ENCODE measurements at regions of chr1 and their contacts with region 1.

Region 1: DNA sequence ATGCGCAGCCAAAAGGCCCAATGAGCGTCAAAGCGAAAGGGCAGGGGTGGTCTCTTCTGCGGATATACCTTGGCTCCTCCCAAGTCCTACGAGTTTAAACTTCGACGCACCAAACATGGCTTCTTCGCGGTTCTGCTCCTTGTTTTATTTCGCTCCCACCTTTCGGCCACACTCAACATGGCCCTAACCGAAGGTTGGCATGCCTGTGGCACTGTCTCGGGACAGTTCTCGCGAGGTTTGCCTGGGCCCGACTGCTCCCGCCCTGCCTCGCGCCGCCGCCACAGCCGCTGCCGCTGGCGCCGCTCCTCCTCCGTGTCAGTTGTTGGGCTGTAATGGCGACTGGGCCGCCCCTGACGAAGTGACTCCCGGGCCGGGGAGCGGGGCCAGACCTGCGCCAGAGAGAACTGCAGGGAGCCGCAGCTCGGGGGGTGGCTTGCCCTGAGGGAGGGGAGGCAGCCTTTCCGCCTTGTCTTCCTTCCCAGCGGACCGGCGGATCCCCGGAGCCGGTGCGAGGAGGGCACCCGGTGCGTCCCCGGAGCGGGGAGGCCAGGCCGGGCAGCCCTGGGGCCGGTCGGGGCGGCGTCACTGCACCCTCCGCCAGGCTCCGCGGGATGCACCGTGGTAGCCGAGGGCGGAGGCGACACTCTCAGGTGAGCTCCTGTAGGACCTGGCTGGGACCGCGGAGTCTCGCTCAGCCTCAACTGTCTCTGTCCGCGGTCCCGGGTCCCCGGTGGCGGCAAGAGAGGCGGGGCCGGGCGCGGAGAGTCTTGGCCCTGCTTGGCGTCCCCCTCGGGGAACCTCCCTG is at the start of gene CEP350:
- DNase-seq: peak; percentile 99
- ATAC-seq: peak; percentile 98
- total RNA-seq, gene CEP350: 27.1 TPM

Region 2: GRCh38 chr1:179882243-179883039 is 72.3 kb before region 1 on chr1 and contains the start of gene TOR1AIP1:
- intact Hi-C with region 1: loop called (anchors 1 kb)
- DNase-seq: peak; percentile 99
- ATAC-seq: peak; percentile 95
- total RNA-seq, gene TOR1AIP1: 41.9 TPM

Region 3: DNA sequence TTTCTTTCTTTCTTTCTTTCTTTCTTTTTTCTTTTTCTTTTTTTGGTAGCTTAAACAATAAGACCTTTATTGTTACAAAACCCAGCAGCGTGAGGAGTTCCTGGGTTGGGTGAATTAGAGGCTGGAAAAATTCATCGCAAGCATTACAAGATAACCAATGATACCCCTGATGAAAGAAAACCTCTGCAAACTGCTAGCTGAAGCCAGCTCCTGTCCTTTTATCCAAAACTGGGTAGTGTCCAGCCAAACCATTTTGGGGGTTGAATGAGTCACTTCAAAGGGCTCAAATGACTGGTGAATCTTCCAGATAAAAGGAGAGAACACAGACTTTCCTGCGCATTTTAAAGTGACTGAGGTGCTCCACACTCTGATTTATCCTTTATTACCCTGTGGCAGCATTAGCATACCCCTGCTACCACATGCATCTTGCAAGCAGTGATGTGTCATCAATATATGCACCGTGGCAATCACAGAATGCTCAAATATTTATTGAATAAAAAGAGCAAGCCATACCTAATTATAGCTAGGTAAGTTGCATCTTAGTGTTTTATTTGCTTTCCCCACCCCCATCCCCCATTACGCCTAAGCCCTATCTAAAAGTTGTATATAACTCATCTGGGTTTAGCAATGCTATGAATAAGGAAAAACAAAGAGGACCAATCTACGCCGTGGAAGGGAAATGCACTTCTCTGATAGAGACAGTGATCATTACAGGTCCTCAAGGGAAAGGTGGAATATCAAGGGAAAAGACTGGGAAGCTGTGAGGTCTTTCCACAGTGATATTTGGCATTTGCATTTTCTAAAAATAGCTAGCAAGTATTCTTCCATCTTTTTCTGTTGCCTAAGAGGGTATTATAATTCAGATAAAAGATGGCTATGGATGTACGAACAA is 32.5 kb before region 1 on chr1:
- intact Hi-C with region 1: no loop called
- DNase-seq: no peak
- ATAC-seq: no peak

Region 4: DNA sequence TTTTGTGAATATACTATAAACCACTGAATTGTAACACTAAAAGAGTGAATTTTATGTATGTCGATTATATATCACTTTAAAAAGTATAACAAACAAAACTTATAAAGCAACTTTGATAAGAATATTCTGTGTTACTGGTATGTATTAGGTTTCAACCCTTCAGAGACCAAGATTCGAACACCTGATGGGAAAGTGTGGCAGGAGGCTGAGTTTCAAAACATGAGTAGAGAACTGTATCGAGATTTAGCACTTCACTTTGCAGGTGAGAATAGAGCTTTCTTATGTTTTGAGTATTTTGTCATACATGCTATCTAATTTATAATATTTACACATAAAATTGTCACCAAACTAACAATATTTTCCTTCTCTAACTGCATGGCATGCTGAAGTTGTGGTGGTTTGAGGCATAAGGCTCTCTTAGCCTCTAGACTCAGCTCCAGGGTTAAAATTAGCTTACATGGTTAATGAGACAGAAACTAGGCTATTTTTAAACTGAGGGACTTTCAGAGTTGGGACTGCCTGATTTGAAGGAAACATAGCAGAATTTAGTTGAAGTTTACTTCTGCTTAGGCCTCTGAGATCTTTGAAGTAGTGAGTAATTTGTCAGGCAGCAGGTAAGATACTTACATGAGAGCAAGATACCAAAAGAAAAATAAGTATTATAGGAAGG is 48.5 kb after region 1 on chr1:
- intact Hi-C with region 1: loop called (anchors 10 kb)
- DNase-seq: no peak
- ATAC-seq: peak; percentile 67

Region 5: DNA sequence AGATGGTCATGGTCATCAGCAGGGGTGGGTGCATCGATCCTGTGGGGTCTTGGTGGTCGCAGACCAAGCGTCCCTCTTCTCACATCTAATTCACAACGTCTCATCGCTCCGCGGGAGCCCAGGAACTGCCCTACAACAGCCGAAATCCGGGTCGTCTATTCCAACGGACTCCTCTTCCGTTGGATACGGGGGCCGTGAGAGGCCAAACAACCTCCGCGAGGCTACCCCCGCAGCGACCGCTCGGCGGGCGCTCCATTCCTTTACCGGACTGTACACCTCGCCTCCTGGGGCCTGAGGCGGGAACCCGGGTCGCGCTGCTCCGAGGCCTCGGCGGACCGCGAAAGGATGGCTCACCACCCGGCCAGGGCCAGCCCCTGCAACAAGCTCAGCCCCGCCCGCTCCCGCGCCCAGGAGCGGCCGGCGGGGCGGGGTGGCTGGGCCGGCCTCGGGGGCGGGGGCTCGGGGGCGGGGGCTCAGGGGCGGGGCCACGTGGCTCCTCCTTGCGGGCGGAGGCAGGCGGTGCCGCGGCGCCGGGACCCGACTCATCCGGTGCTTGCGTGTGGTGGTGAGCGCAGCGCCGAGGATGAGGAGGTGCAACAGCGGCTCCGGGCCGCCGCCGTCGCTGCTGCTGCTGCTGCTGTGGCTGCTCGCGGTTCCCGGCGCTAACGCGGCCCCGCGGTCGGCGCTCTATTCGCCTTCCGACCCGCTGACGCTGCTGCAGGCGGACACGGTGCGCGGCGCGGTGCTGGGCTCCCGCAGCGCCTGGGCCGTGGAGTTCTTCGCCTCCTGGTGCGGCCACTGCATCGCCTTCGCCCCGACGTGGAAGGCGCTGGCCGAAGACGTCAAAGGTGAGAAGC is 199.9 kb after region 1 on chr1 and contains the start of gene QSOX1:
- intact Hi-C with region 1: loop called (anchors 1 kb)
- DNase-seq: peak; percentile 96
- ATAC-seq: peak; percentile 95
- total RNA-seq, gene QSOX1: 97.7 TPM

Measured in Right ventricle myocardium inferior (tissue), 1 donor.